Ascending aorta (tissue), 2 donors: ENCODE measurements at regions of chr15 and their contacts with region 1.

Region 1: GRCh38 chr15:93030430-93031105 is 58.4 kb downstream of the RGMA start:
- DNase-seq: peak in 1 of 2 donors; percentile 89
- H3K4me3 ChIP-seq: peak overlapping the region in 1 of 2 donors; percentile 4
- H3K27ac ChIP-seq: peak overlapping the region; percentile 93 to 95
- H3K4me1 ChIP-seq: peaks cover 35 to 48% of the 10 kb centered on the region in 2 donors
- H3K27me3 ChIP-seq: no peaks in the 10 kb centered on the region
- CTCF ChIP-seq: peak; percentile 85 to 92 (median 90)

Region 2: GRCh38 chr15:93072411-93073394 is 42.1 kb after region 1 on chr15:
- intact Hi-C with region 1: loop called (anchors 1 kb)
- DNase-seq: peak in 1 of 2 donors; percentile 88
- H3K4me3 ChIP-seq: peak overlapping the region; percentile 81 to 91
- H3K27ac ChIP-seq: peak overlapping the region; percentile 84 to 86
- H3K4me1 ChIP-seq: peaks cover 2 to 21% of the 10 kb centered on the region in 2 donors
- H3K27me3 ChIP-seq: no peaks in the 10 kb centered on the region
- CTCF ChIP-seq: peak in 1 of 3 experiments; percentile 4

Region 3: DNA sequence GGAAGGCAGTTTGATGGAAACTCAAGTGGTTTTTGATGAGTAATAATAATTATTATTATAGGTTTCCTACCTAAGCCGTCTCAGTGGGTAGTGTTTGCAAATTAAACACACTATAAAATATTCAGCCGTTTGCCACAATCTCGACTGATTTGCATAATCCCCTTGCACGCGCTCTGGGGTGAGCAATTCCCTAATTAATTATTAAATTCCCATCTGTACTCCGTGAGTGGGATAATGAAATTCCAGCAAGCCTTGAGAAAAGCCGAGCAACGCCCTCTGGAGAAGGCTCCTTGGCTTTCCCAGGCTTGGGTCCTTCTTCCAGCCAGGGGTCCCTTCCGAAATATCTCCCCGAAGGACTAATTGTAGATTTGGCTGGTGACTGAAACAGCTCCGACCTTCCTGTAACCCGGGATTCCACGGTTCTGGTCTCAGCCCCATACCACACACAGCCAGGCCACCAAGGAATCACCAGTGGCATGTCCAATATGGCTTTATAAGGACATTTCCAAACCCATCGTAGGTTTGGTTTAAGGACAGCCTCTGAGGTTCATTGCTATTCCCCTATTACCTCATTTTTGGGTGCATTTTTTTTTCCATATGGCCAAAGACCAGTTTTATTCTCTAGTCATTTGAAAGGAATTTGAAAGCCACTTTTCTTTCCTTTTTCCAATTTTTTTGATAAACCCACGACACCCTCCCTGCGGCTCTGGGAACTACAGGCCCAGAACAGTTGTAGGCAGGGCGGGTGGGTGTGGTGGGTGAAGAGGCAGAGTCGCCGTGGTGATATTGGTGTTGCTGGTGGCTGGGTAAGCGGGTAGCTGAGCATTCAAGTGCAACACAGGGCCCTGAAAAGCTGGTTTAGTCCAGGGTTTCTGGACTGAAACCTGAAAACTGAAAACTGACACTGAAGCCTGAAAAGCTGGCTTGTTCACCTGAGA is 91.7 kb after region 1 on chr15:
- intact Hi-C with region 1: no loop called
- DNase-seq: no peak
- H3K4me3 ChIP-seq: no peak overlapping the region
- H3K27ac ChIP-seq: no peak overlapping the region
- H3K4me1 ChIP-seq: no peaks in the 10 kb centered on the region
- H3K27me3 ChIP-seq: no peaks in the 10 kb centered on the region
- CTCF ChIP-seq: no peak

Region 4: GRCh38 chr15:93141371-93141794 is 110.8 kb after region 1 on chr15:
- intact Hi-C with region 1: loop called (anchors 10 kb)
- DNase-seq: no peak
- H3K4me3 ChIP-seq: no peak overlapping the region
- H3K27ac ChIP-seq: no peak overlapping the region
- H3K4me1 ChIP-seq: no peaks in the 10 kb centered on the region
- H3K27me3 ChIP-seq: no peaks in the 10 kb centered on the region
- CTCF ChIP-seq: no peak

Region 5: GRCh38 chr15:93974804-93975481 is 944.4 kb after region 1 on chr15:
- intact Hi-C with region 1: loop called (anchors 5 kb)
- DNase-seq: no peak
- H3K4me3 ChIP-seq: no peak overlapping the region
- H3K27ac ChIP-seq: no peak overlapping the region
- H3K4me1 ChIP-seq: no peaks in the 10 kb centered on the region
- H3K27me3 ChIP-seq: no peaks in the 10 kb centered on the region
- CTCF ChIP-seq: peak in 1 of 3 experiments; percentile 23